ENCODE measurements at regions of chr1 and their contacts with region 1.

Region 1: GRCh38 chr1:147494998-147495580 is 46.2 kb upstream of the BCL9 start:
- DNase-seq: peak; percentile 68
- ATAC-seq: peak; percentile 94
- H3K4me3 ChIP-seq: no peak overlapping the region
- H3K27ac ChIP-seq: no peak overlapping the region
- H3K4me1 ChIP-seq: no peaks in the 10 kb centered on the region
- H3K27me3 ChIP-seq: peaks cover 4% of the 10 kb centered on the region
- CTCF ChIP-seq: peak; percentile 94

Region 2: GRCh38 chr1:147236959-147237826 is 257.9 kb before region 1 on chr1:
- intact Hi-C with region 1: no loop called
- DNase-seq: no peak
- ATAC-seq: peak; percentile 63
- H3K4me3 ChIP-seq: no peak overlapping the region
- H3K27ac ChIP-seq: no peak overlapping the region
- H3K4me1 ChIP-seq: peaks cover 16% of the 10 kb centered on the region
- H3K27me3 ChIP-seq: no peaks in the 10 kb centered on the region
- CTCF ChIP-seq: no peak

Region 3: DNA sequence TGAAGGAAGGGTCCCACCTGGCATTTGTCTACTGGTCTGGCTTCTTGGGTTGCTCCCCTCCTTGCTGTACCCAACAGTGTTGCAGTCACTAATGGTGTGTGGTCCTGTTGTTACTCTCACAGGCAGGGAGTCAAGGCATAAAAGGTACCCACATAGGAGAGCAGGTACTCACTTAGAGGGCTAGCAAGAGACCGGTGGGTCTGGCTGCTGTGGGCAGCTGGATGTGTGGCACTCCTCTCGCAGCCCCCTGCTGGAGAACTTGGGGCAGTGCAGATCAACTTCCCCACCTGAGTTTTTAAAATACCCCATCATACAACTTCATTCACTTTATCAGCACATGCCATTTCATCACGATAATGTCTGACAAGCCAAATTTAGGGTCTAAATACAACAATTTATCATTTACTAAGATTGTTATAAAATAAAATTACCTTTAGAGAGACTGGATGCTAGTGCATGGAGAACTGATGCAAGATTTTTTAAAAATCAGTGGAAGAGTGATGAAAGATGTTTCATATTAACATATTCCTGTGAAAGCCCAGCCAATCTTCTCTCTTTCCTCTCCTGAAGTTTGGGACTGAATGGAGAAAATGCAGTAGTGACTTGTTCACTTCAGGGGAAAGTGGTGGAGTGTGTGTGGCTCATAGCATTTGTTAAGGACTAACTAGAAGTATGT is 132.5 kb after region 1 on chr1:
- intact Hi-C with region 1: loop called (anchors 5 kb)
- DNase-seq: peak; percentile 73
- ATAC-seq: peak; percentile 91
- H3K4me3 ChIP-seq: no peak overlapping the region
- H3K27ac ChIP-seq: no peak overlapping the region
- H3K4me1 ChIP-seq: peaks cover 7% of the 10 kb centered on the region
- H3K27me3 ChIP-seq: no peaks in the 10 kb centered on the region
- CTCF ChIP-seq: peak; percentile 93